CD4-positive, alpha-beta T cell (primary cell): ENCODE measurements at regions of chr17 and their contacts with region 1.

Region 1: DNA sequence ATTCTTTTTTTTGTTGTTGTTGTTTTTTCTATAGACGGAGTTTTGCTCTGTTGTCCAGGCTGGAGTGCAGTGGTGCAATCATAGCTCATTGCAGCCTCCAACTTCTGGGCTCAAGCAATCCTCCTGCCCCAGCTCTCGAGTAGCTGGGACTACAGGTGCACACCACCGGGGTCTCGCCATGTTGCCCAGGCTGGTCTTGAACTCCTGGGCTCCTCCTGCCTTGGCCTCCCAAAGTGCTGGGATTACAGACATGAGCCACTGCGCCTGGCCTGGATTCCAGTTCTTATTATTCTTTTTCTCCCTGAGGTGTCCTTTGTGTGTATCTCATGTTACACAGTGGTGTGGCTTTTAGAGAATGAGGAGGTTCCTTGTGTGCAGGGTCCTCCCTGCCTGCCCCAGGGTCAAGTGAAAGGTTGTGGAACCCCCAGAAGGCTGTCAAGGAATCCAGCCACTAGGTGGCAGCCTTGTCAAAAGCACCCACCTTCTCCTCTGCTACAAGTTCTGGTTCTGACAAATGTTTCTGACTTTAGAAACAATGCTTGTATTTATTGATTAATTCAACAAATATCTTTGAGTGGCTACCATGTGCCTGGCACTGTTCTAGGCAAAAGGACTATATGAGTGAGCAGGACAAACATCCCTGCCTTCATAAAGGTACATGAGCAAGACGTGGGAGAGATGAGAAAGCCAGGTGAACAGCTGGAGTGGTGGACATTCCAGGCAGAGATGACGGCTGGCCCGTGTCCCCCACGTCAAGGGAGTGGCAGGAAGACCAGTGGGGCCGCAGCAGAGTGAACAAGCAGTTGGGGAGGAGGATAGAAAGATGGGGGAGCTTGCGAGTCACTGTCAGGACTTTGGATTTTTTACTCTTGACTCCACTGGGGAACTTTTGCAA is 112.4 kb downstream of the SPECC1 start:
- DNase-seq: peak; percentile 48 to 82 (median 64)
- ATAC-seq: peak; percentile 57
- H3K4me3 ChIP-seq: no peak overlapping the region
- H3K4me3 Mint-ChIP-seq: no peak overlapping the region
- H3K27ac ChIP-seq: no peak overlapping the region
- H3K27ac Mint-ChIP-seq: no peak overlapping the region
- H3K4me1 ChIP-seq: no peaks in the 10 kb centered on the region
- H3K4me1 Mint-ChIP-seq: no peaks in the 10 kb centered on the region
- H3K27me3 ChIP-seq: no peaks in the 10 kb centered on the region
- H3K27me3 Mint-ChIP-seq: peaks cover 8% of the 10 kb centered on the region
- CTCF ChIP-seq: peak; percentile 96

Region 2: DNA sequence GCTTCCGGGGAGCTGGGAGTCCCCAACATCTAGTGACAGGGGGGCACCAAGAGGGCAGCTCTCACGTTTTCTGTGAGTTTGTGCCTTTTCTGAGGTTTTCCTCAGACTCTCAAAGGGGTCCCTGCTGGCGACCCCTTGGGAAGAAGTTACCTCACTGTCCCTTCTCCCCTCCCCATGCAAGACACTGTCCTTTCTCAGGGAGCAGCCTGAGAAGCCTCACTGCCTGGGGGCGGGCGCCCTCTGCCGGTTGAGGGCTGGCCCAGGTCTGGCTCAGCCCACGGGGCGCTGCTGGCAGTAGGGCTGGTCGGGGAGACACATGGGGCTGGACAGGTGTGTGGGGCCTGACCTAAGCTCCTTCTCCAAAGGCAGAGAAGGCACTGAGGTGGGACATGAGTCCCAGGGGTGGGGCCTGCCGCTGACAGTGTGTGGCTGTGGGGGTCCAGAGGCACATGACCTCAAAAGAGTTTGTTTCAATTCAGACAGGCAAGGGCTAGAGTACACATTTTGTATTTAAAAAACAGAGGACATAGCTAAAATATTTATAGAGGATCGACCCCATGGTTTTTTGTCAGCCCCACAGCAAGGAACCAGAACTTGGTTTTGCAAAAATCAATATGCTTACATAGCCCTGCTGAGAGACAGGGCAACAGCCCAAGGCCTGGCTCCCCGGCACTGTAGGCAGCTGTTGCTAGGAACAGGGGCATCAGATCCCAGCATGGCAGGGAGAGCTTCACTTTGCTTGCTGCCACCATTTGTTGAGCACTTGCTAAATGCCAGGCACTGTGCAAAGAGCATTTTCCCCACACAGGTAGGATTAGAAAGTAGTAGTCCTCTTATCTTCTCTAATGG is 355.0 kb before region 1 on chr17:
- CTCF ChIA-PET with region 1: no interaction called
- POLR2A ChIA-PET with region 1: no interaction called
- intact Hi-C with region 1: loop called in 1 of 2 experiments (anchors 10 kb)
- DNase-seq: peak; percentile 62 to 89 (median 78)
- ATAC-seq: peak; percentile 80
- H3K4me3 ChIP-seq: no peak overlapping the region
- H3K4me3 Mint-ChIP-seq: peak overlapping the region; percentile 17
- H3K27ac ChIP-seq: no peak overlapping the region
- H3K27ac Mint-ChIP-seq: peak overlapping the region; percentile 84
- H3K4me1 ChIP-seq: peaks cover 54% of the 10 kb centered on the region
- H3K4me1 Mint-ChIP-seq: peaks cover 52% of the 10 kb centered on the region
- H3K27me3 ChIP-seq: no peaks in the 10 kb centered on the region
- H3K27me3 Mint-ChIP-seq: no peaks in the 10 kb centered on the region
- CTCF ChIP-seq: peak; percentile 97

Region 3: GRCh38 chr17:20149251-20149650 is 27.6 kb after region 1 on chr17:
- CTCF ChIA-PET with region 1: no interaction called
- POLR2A ChIA-PET with region 1: no interaction called
- intact Hi-C with region 1: loop called in 1 of 2 experiments (anchors 1 kb)
- DNase-seq: no peak
- ATAC-seq: no peak
- H3K4me3 ChIP-seq: no peak overlapping the region
- H3K4me3 Mint-ChIP-seq: no peak overlapping the region
- H3K27ac ChIP-seq: no peak overlapping the region
- H3K27ac Mint-ChIP-seq: no peak overlapping the region
- H3K4me1 ChIP-seq: no peaks in the 10 kb centered on the region
- H3K4me1 Mint-ChIP-seq: no peaks in the 10 kb centered on the region
- H3K27me3 ChIP-seq: no peaks in the 10 kb centered on the region
- H3K27me3 Mint-ChIP-seq: no peaks in the 10 kb centered on the region
- CTCF ChIP-seq: no peak

Region 4: GRCh38 chr17:20315821-20316220 is 194.2 kb after region 1 on chr17:
- CTCF ChIA-PET with region 1: interaction called, 3 read pairs
- POLR2A ChIA-PET with region 1: no interaction called
- intact Hi-C with region 1: loop called in 1 of 2 experiments (anchors 1 kb)
- DNase-seq: no peak
- ATAC-seq: no peak
- H3K4me3 ChIP-seq: no peak overlapping the region
- H3K4me3 Mint-ChIP-seq: no peak overlapping the region
- H3K27ac ChIP-seq: no peak overlapping the region
- H3K27ac Mint-ChIP-seq: no peak overlapping the region
- H3K4me1 ChIP-seq: peaks cover 6% of the 10 kb centered on the region
- H3K4me1 Mint-ChIP-seq: no peaks in the 10 kb centered on the region
- H3K27me3 ChIP-seq: no peaks in the 10 kb centered on the region
- H3K27me3 Mint-ChIP-seq: no peaks in the 10 kb centered on the region
- CTCF ChIP-seq: no peak

Region 5: DNA sequence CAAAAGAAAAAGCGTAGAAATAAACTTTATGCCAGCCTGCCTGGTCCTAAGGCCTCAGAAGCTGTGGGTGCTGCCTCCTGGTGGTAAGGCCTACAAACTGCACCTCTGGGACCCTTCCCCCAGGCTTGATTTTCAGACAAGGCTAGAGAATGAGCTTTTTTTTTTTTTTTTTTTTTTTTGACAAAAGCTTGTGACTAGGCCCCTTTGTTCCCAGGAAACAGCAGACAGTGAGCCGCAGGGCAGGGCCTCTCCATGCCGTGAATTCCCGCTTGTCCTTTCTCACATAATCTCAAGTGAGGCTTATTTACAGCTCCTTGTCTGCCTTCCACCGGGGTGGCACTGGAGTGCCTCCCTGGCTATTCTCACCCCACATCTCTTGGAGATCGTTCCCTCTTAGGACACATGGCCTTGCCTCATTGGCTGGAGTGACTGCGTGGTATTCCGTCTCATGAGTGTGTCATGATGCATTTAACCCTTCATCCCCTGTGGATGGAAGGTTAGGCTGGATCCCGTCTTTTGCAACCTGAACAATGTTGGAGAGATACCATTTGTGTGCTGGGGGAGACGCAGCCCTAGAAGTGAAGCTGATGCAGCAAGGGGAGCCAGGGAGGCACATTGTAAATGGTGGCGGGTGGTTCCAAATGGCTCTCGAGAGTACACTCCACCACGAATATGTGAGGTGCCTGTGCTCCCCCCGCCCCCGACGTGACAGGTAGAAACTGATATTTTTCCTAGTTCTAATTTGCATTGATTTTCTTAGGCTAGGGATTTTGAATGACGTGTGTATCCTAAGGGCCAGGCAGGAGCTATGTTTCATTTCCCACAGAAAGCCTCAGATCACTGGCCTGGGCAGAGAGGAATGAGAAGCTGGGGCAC is 871.6 kb after region 1 on chr17:
- CTCF ChIA-PET with region 1: interaction called, 3 read pairs
- POLR2A ChIA-PET with region 1: no interaction called
- intact Hi-C with region 1: loop called in 1 of 2 experiments (anchors 5 kb)
- DNase-seq: peak; percentile 30 to 82 (median 58)
- ATAC-seq: peak; percentile 97
- H3K4me3 ChIP-seq: no peak overlapping the region
- H3K4me3 Mint-ChIP-seq: no peak overlapping the region
- H3K27ac ChIP-seq: no peak overlapping the region
- H3K27ac Mint-ChIP-seq: peak overlapping the region; percentile 2
- H3K4me1 ChIP-seq: peaks cover 6% of the 10 kb centered on the region
- H3K4me1 Mint-ChIP-seq: no peaks in the 10 kb centered on the region
- H3K27me3 ChIP-seq: no peaks in the 10 kb centered on the region
- H3K27me3 Mint-ChIP-seq: no peaks in the 10 kb centered on the region
- CTCF ChIP-seq: peak; percentile 86